ENCODE measurements at regions of chr6 and their contacts with region 1.

Region 1: GRCh38 chr6:154276810-154277628 is 79.6 kb downstream of the IPCEF1 start:
- DNase-seq: peak in 2 of 5 donors; percentile 60
- H3K4me3 ChIP-seq: peak overlapping the region in 2 of 3 donors; percentile 3 to 46
- H3K27ac ChIP-seq: no peak overlapping the region
- H3K4me1 ChIP-seq: no peaks in the 10 kb centered on the region
- H3K27me3 ChIP-seq: no peaks in the 10 kb centered on the region
- CTCF ChIP-seq: peak; percentile 68

Region 2: GRCh38 chr6:153957394-153957793 is 319.6 kb before region 1 on chr6:
- intact Hi-C with region 1: no loop called
- DNase-seq: no peak
- H3K4me3 ChIP-seq: no peak overlapping the region
- H3K27ac ChIP-seq: no peak overlapping the region
- H3K4me1 ChIP-seq: no peaks in the 10 kb centered on the region
- H3K27me3 ChIP-seq: no peaks in the 10 kb centered on the region
- CTCF ChIP-seq: no peak

Region 3: GRCh38 chr6:154156135-154156896 is 120.7 kb before region 1 on chr6:
- intact Hi-C with region 1: loop called (anchors 10 kb)
- DNase-seq: peak; percentile 76 to 92 (median 87)
- H3K4me3 ChIP-seq: peak overlapping the region in 1 of 3 donors; percentile 15
- H3K27ac ChIP-seq: peak overlapping the region; percentile 2 to 8
- H3K4me1 ChIP-seq: peaks cover 2 to 12% (median 5%) of the 10 kb centered on the region in 3 donors
- H3K27me3 ChIP-seq: no peaks in the 10 kb centered on the region
- CTCF ChIP-seq: peak; percentile 75

Region 4: GRCh38 chr6:154721460-154721859 is 444.4 kb after region 1 on chr6:
- intact Hi-C with region 1: no loop called
- DNase-seq: no peak
- H3K4me3 ChIP-seq: no peak overlapping the region
- H3K27ac ChIP-seq: no peak overlapping the region
- H3K4me1 ChIP-seq: no peaks in the 10 kb centered on the region
- H3K27me3 ChIP-seq: no peaks in the 10 kb centered on the region
- CTCF ChIP-seq: no peak